Gastrocnemius medialis (tissue), 4 donors: ENCODE measurements at regions of chr19 and their contacts with region 1.

Region 1: GRCh38 chr19:1213391-1214286 is 8.1 kb downstream of the STK11 start:
- DNase-seq: peak; percentile 59 to 93
- ATAC-seq: peak; percentile 38 to 46
- H3K4me3 ChIP-seq: peak overlapping the region; percentile 24 to 41 (median 36)
- H3K27ac ChIP-seq: peak overlapping the region; percentile 94 to 98 (median 96)
- H3K4me1 ChIP-seq: peaks cover 87 to 96% of the 10 kb centered on the region in 2 donors
- H3K27me3 ChIP-seq: no peaks in the 10 kb centered on the region
- CTCF ChIP-seq: no peak
- POLR2A ChIP-seq: peak; percentile 32 to 59

Region 2: DNA sequence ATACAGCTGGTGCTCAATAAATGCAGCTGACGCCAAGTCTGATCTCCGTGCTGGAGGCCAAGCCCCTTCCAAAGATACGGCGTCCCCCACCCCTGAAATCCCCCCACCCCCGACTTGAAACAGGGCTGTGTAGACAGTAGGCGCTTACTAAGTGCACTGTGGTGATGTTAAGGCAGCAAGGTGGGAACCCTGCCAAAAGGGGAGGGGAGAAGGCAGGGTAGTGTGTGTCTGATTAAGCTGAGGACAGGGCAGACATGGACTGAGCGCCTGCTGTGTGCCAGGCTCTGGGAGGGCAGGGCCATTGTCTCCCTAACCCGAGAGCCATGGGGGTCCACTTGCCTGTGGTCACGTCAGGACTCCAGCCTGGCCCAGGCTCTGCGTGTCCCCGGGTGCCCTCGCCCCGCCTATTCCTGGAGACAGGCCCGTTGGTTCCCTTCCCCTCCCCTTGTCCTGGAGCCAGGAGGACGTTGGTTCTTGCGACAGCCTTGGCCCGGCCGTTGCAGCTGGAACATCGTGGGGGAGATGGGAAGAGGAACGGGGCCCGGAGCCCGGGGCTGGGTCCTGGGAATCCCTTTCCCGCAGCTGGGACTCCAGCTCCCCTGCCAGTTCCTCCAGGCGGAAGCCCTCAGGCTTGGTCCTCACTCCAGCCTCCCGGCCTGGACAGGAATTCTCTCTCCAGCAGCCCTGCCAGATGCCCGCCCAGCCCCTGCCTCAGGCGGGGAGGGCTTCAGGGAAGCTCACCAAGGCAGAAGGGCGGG is 363.2 kb before region 1 on chr19:
- in situ Hi-C with region 1: no loop called
- intact Hi-C with region 1: no loop called
- DNase-seq: peak; percentile 74 to 86
- ATAC-seq: peak; percentile 89 to 90
- H3K4me3 ChIP-seq: peak overlapping the region in 1 of 4 donors; percentile 17
- H3K27ac ChIP-seq: peak overlapping the region; percentile 59 to 79 (median 72)
- H3K4me1 ChIP-seq: peaks cover 0 to 6% of the 10 kb centered on the region in 2 donors
- H3K27me3 ChIP-seq: peaks cover 58 to 66% (median 58%) of the 10 kb centered on the region in 3 donors
- CTCF ChIP-seq: no peak
- POLR2A ChIP-seq: no peak

Region 3: GRCh38 chr19:872266-872951 is 341.2 kb before region 1 on chr19:
- in situ Hi-C with region 1: no loop called
- intact Hi-C with region 1: no loop called
- DNase-seq: peak in 1 of 2 donors; percentile 59
- ATAC-seq: peak in 1 of 2 donors; percentile 33
- H3K4me3 ChIP-seq: no peak overlapping the region
- H3K27ac ChIP-seq: peak overlapping the region in 2 of 4 donors; percentile 8 to 37
- H3K4me1 ChIP-seq: no peaks in the 10 kb centered on the region
- H3K27me3 ChIP-seq: no peaks in the 10 kb centered on the region
- CTCF ChIP-seq: no peak
- POLR2A ChIP-seq: no peak

Region 4: DNA sequence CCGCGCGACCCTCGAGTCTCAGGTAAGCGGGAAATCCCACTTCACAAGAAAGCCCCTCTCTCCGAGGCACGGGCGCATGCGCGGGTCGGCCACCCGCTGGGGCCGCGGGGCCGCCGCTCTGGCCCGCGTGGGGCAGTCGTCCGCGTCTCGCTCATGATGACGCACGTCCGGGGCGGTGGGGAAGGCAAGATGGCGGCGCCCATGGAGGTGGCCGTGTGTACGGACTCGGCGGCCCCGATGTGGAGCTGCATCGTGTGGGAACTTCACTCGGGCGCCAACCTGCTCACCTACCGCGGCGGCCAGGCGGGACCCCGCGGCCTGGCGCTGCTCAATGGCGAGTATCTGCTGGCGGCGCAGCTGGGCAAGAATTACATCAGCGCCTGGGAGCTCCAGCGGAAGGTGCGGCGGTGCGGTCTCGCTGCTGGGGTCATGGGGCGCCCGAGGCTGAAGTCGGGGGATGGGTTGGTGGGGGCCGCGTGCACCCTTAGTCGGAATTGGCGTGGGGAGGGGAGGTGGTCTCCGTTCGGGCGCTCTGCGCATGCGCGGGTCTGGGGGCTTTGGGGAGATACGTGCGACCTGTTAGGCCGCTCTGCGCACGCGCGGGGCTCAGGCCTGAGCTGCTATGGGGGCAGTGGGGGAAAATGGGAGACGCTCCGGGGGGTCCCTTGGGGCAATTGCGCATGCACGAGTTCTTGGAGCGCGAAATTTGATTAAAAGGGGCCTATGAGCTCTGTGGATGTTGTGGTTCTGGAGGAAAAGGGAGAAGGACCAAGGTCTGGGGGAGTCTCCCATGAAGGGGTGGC is 229.3 kb before region 1 on chr19 and contains the start of gene WDR18:
- in situ Hi-C with region 1: no loop called
- intact Hi-C with region 1: no loop called
- DNase-seq: peak; percentile 89
- ATAC-seq: peak; percentile 91
- H3K4me3 ChIP-seq: peak within 1 kb of the TSS; percentile 87 to 98 (median 94)
- H3K27ac ChIP-seq: peak within 1 kb of the TSS; percentile 85 to 97 (median 92)
- H3K4me1 ChIP-seq: peaks cover 17 to 19% of the 10 kb centered on the region in 2 donors
- H3K27me3 ChIP-seq: peaks cover 0 to under 1% (median 0%) of the 10 kb centered on the region in 3 donors
- CTCF ChIP-seq: peak; percentile 4 to 45 (median 23)
- POLR2A ChIP-seq: peak; percentile 52 to 62
- total RNA-seq, gene WDR18: 4.4 to 59.0 (median 28.6) TPM

Region 5: DNA sequence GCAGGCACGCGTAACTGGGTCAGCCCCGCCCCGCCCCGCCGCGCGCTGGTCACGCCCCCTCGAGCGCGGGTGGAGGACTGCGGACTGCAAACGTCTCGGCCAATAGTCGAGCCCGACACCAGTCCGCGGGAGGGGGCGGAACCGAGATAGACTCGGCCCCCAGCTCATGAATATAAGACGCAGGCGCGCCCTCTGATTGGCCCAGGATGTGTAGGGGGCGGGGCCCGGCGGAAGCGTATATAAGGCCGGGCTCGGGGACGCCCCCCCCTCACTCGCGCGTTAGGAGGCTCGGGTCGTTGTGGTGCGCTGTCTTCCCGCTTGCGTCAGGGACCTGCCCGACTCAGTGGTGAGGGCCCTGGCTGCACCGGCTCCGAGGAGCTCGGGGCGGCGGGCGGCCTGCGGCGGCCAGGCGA is 55.4 kb after region 1 on chr19 and contains the start of gene CIRBP:
- in situ Hi-C with region 1: no loop called
- intact Hi-C with region 1: loop called (anchors 2 kb)
- DNase-seq: peak; percentile 100
- ATAC-seq: peak; percentile 66 to 76
- H3K4me3 ChIP-seq: peak within 1 kb of the TSS; percentile 51 to 81 (median 72)
- H3K27ac ChIP-seq: peak within 1 kb of the TSS; percentile 92 to 99 (median 98)
- H3K4me1 ChIP-seq: peaks cover 66 to 72% of the 10 kb centered on the region in 2 donors
- H3K27me3 ChIP-seq: no peaks in the 10 kb centered on the region
- CTCF ChIP-seq: peak in 1 of 5 experiments; percentile 40
- POLR2A ChIP-seq: peak; percentile 99 to 100
- total RNA-seq, gene CIRBP: 274 to 578 (median 418) TPM

Region 6: DNA sequence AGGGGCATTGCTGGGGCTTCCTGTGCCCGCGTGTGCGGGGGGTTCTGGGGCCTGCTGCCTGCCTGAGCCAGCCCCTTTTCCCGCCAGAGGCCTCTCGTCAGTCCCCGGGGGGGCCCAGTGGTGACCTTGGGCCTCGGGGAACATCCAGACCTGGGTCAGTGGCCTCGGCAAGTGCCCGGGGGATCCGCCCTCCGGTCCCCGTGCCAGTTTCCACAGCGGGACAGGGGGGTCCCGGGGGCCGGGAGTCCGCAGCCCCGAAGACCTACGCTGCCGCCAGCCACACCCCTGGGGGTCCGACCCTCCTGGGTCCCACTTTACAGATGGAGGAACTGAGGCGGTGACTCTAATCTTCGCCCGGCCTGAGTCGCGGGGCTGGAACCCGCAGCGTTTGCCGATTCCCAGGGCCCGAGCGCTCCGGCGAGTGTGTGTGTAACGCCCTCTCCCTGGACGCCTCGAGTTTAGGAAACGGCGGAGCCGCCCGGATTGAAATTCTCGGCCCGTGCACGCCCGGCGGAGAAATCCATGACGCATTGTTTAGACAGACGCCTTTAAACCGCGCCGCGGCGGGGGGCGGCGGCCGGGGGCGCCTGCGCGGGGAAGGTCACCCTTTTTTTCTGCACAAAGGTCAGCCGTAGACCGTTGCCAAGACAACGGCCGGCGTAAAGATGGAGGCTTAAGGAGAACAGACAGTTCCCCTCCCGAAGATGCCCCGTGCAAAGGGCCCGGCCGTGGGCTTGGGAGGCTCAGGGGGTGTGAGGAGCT is 111.3 kb after region 1 on chr19:
- in situ Hi-C with region 1: no loop called
- intact Hi-C with region 1: no loop called
- DNase-seq: no peak
- ATAC-seq: no peak
- H3K4me3 ChIP-seq: peak overlapping the region; percentile 7 to 43 (median 30)
- H3K27ac ChIP-seq: no peak overlapping the region
- H3K4me1 ChIP-seq: peaks cover 7 to 8% of the 10 kb centered on the region in 2 donors
- H3K27me3 ChIP-seq: peaks cover 24 to 34% (median 30%) of the 10 kb centered on the region in 3 donors
- CTCF ChIP-seq: no peak
- POLR2A ChIP-seq: no peak